Activated CD8-positive, alpha-beta T cell treated with anti-CD3 and anti-CD28 coated beads for 36 hours (primary cell): ENCODE measurements at regions of chr5 and their contacts with region 1.

Region 1: DNA sequence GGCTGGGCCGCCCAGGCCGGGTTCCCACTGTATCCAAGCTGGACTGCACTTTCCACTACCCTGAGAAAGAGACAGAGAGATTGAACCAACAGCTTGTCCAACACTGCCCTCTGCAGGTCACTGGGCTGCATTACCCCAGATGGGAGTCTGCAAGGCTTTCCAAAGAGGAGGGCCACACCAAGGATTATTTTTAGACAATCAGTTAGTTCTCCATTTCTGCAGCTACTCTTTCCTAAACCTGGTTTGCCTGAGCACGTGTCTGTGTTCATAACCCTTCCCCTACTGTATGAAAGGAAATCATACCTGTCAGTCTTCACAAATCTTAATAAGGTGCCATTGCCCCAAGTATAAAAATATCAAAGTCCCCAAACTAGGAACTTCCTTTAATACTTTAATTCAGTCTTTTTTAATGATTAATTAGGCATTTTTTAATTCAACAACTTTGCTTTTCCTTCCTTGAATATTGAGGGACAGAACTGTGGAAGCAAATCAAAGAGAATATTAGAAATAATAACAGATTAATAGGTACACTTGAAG is 13.4 kb upstream of the FGF1 start:
- DNase-seq: peak; percentile 86
- ATAC-seq: peak; percentile 98
- H3K4me3 Mint-ChIP-seq: no peak overlapping the region
- H3K27ac Mint-ChIP-seq: no peak overlapping the region
- H3K4me1 Mint-ChIP-seq: peaks cover 2% of the 10 kb centered on the region
- H3K27me3 Mint-ChIP-seq: peaks cover under 1% of the 10 kb centered on the region
- CTCF ChIP-seq: peak; percentile 97

Region 2: DNA sequence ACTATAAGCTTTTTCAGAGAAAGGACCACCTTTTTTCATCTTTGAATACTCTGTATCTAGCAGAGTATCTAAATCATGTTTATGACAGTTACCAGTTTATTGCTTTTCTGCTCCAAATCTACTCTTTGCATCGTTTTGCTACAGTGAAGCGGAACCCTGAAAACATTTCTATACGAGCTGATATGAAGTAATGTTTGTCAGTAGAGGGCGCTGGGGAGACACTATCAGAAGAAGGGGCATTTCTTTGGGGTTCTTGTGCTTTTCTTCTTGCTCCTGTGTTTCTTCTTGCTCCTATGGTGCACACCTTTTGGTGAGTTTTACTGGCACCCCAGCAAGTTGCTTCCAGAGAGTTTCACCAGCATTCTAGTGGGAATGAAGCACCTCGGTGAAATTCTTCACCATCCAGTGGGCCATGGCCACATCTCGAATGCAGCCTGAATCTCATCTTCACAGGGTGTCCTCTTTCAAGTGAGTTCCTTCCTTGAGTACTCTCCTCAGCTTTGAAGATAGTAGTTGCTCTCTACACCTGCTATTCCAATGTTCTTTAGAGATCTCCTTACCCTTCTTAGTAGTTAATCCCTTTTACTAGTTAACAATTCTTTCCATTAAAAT is 111.8 kb before region 1 on chr5:
- CTCF ChIA-PET with region 1: interaction called, 15 read pairs
- POLR2A ChIA-PET with region 1: no interaction called
- intact Hi-C with region 1: no loop called
- DNase-seq: peak; percentile 62
- ATAC-seq: no peak
- H3K4me3 Mint-ChIP-seq: no peak overlapping the region
- H3K27ac Mint-ChIP-seq: no peak overlapping the region
- H3K4me1 Mint-ChIP-seq: peaks cover 2% of the 10 kb centered on the region
- H3K27me3 Mint-ChIP-seq: peaks cover 11% of the 10 kb centered on the region
- CTCF ChIP-seq: peak; percentile 71

Region 3: DNA sequence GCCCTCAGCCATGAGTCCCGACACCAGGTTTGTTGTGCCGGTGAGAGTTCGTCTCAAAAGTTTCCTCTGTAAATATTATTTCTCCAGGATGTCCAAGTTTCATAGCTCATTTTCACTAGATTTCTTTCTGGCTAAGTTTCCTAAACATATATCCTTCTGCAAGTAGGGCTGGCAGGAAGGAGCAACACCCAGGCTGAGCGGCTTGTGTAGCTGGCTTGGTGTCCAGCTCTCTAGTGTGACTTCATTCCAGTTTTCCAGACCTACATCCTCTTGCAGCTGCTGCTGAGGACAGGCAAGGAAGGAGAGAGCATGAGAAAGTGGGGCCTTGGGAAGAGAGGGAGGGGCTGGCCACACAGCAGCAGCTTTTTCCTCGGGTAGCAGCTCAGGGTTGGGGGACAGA is 93.6 kb before region 1 on chr5:
- CTCF ChIA-PET with region 1: interaction called, 71 read pairs
- POLR2A ChIA-PET with region 1: no interaction called
- intact Hi-C with region 1: no loop called
- DNase-seq: no peak
- ATAC-seq: no peak
- H3K4me3 Mint-ChIP-seq: no peak overlapping the region
- H3K27ac Mint-ChIP-seq: no peak overlapping the region
- H3K4me1 Mint-ChIP-seq: no peaks in the 10 kb centered on the region
- H3K27me3 Mint-ChIP-seq: peaks cover 13% of the 10 kb centered on the region
- CTCF ChIP-seq: no peak

Region 4: GRCh38 chr5:142611154-142611553 is 88.1 kb before region 1 on chr5:
- CTCF ChIA-PET with region 1: interaction called, 71 read pairs
- POLR2A ChIA-PET with region 1: no interaction called
- intact Hi-C with region 1: loop called (anchors 2 kb)
- DNase-seq: peak; percentile 87
- ATAC-seq: peak; percentile 98
- H3K4me3 Mint-ChIP-seq: no peak overlapping the region
- H3K27ac Mint-ChIP-seq: no peak overlapping the region
- H3K4me1 Mint-ChIP-seq: no peaks in the 10 kb centered on the region
- H3K27me3 Mint-ChIP-seq: peaks cover 10% of the 10 kb centered on the region
- CTCF ChIP-seq: peak; percentile 91

Region 5: GRCh38 chr5:142644640-142645361 is 54.5 kb before region 1 on chr5:
- CTCF ChIA-PET with region 1: interaction called, 13 read pairs
- POLR2A ChIA-PET with region 1: no interaction called
- intact Hi-C with region 1: no loop called
- DNase-seq: no peak
- ATAC-seq: no peak
- H3K4me3 Mint-ChIP-seq: no peak overlapping the region
- H3K27ac Mint-ChIP-seq: no peak overlapping the region
- H3K4me1 Mint-ChIP-seq: no peaks in the 10 kb centered on the region
- H3K27me3 Mint-ChIP-seq: peaks cover 2% of the 10 kb centered on the region
- CTCF ChIP-seq: no peak

Region 6: DNA sequence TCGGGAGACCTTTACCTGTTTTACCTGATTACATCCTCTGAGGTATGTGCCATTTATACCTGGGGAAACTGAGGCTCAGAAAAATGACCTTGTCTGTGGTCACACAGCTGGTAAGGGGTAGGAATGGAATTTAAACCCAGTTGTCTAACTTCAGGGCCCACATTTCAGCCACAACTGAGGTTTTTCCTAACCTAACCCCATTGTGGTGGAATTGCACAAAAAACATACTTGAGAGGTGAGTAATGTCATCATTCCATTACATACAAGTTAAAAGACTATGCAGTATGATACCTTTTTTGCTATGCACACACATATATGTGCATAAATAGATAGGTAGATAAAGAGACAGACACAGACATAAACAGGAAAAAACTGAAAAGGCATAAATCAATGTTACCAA is 27.5 kb before region 1 on chr5:
- CTCF ChIA-PET with region 1: interaction called, 10 read pairs
- POLR2A ChIA-PET with region 1: no interaction called
- intact Hi-C with region 1: no loop called
- DNase-seq: no peak
- ATAC-seq: no peak
- H3K4me3 Mint-ChIP-seq: no peak overlapping the region
- H3K27ac Mint-ChIP-seq: no peak overlapping the region
- H3K4me1 Mint-ChIP-seq: no peaks in the 10 kb centered on the region
- H3K27me3 Mint-ChIP-seq: no peaks in the 10 kb centered on the region
- CTCF ChIP-seq: no peak

Region 7: GRCh38 chr5:142685418-142686209 is 13.6 kb before region 1 on chr5 and contains the start of gene FGF1:
- CTCF ChIA-PET with region 1: interaction called, 28 read pairs
- POLR2A ChIA-PET with region 1: no interaction called
- intact Hi-C with region 1: no loop called
- DNase-seq: no peak
- ATAC-seq: no peak
- H3K4me3 Mint-ChIP-seq: no peak within 1 kb of the TSS
- H3K27ac Mint-ChIP-seq: no peak within 1 kb of the TSS
- H3K4me1 Mint-ChIP-seq: no peaks in the 10 kb centered on the region
- H3K27me3 Mint-ChIP-seq: peaks cover 6% of the 10 kb centered on the region
- CTCF ChIP-seq: no peak
- total RNA-seq, gene FGF1: not detected